Activated B cell treated with CpG ODN at 0.5 μM for 24 hours (primary cell): ENCODE measurements at regions of chr5 and their contacts with region 1.

Region 1: GRCh38 chr5:181260387-181261319 is at the start of gene TRIM52:
- DNase-seq: peak; percentile 86
- ATAC-seq: peak; percentile 80
- H3K4me3 Mint-ChIP-seq: peak within 1 kb of the TSS; percentile 98
- H3K27ac Mint-ChIP-seq: peak within 1 kb of the TSS; percentile 96
- H3K4me1 Mint-ChIP-seq: peaks cover 49% of the 10 kb centered on the region
- H3K27me3 Mint-ChIP-seq: no peaks in the 10 kb centered on the region
- CTCF ChIP-seq: no peak
- total RNA-seq, gene TRIM52: 30.9 and 36.9 TPM in 2 replicates

Region 2: DNA sequence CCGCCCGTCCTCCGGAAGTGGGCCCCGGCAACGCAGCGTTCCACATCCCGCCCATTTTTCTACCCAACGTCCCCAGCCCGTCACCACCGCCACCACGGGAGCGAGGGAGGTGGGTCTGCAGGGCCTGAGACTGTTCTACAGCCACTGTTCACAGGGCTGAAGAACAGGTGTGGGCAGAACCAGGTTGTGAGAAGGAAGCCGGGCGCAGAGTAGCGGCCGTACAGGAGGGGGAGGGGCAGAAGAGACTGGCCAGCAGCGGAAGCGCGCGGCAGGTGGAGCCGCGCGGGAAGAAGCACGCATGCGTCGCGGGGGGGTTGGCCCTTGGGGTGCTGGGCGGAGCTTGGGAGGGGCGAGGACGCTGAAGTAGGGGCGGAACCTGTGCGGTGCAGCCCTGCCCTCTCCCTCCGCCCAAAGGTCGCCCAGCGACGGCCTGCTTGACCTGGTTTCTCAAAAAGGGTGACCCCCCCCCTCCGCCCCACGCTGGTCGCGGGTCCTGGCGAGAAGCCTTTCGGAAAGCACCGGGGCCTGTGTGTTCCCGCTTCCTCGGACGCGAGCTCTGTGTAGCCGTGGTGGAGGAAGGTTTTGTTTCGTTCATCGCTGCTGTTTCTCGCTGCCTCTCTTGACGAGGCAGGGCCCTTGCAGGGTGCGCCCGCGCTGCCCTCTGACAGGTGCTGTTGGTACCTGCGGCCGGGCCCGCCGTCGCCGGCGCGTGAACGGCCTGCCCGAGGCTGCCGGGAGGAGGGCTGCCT is 450.3 kb before region 1 on chr5:
- CTCF ChIA-PET with region 1: no interaction called
- POLR2A ChIA-PET with region 1: interaction called, 8 read pairs
- intact Hi-C with region 1: loop called (anchors 1 kb)
- DNase-seq: peak; percentile 98
- ATAC-seq: peak; percentile 84
- H3K4me3 Mint-ChIP-seq: peak overlapping the region; percentile 98
- H3K27ac Mint-ChIP-seq: peak overlapping the region; percentile 100
- H3K4me1 Mint-ChIP-seq: peaks cover 76% of the 10 kb centered on the region
- H3K27me3 Mint-ChIP-seq: no peaks in the 10 kb centered on the region
- CTCF ChIP-seq: no peak

Region 3: DNA sequence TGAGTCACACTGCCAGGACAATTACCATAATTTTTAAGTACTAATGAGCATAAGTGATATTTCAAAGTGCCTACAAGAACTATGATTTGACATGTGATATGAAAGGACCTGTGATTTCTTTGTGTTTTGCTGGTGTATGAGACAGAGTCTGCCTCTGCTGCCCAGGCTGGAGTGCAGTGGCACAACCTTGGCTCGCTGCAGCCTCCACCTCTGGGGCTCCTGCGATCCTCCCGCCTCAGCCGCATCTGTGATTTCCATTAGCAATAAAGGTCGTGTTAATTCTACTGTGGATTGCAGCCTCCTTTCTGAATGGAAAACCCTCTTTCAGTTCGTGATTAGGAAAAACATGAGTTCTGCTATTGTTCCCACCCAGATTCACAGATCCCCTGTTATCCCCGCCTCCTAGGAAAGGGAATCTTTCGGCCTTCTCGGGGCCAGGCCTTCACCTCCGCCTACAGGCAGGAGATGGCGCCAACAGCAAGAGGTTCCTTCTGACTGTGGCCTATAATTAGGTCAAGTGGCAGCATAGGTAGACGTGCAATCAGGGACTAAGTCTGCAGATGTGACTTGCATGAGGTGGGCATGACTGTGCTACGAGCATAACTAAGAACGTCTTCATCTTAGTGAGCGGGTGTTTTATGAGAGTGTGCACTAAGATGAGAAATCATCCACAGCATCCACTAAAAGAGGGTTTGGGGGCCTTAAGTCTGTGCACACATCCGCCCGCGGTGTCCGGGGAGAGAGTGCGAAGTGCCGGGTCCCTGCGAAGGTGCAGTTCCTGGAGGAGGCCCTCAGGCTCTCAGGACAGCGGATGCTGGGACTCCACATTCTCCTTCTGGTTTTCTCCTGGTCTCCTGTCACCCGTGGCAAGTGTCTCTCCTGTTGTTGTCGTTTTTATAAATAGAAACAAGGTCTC is 78.7 kb before region 1 on chr5:
- CTCF ChIA-PET with region 1: interaction called, 3 read pairs
- POLR2A ChIA-PET with region 1: interaction called, 63 read pairs
- intact Hi-C with region 1: loop called (anchors 1 kb)
- DNase-seq: no peak
- ATAC-seq: peak; percentile 70
- H3K4me3 Mint-ChIP-seq: no peak overlapping the region
- H3K27ac Mint-ChIP-seq: no peak overlapping the region
- H3K4me1 Mint-ChIP-seq: peaks cover 31% of the 10 kb centered on the region
- H3K27me3 Mint-ChIP-seq: no peaks in the 10 kb centered on the region
- CTCF ChIP-seq: peak; percentile 41

Region 4: DNA sequence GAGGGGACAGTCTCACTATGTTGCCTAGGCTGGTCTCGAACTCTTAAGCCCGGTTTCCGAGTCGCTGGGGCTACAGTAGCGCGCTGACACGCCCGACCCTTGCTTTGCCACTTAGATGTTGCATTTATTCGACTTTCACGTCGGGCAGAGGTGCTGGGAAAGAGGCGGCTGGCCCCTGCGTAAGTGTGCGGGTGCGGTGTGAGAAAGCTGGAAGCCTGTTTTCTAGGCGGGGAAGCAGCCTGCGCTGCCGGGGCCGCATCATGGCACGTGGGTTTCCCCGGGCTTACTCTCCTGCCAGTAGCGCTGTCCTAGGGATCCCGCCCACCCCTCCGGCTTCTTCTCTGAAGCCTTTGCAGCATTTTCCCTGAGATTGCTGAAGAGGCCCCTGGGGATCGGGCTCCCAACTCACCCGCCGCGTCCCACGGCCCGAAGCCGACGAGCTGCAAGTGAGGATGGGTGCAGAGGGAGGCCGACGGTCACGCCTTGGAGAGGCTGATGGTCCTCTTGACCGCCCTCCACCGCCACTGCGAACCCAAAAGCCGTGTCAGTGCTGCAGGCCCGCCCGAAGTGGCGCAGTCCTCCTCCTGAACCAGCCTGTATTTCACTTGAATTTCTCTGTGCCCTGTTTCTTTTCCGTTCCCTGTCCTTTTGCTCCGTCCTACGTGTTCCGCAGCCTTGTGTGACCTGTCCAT is 43.4 kb before region 1 on chr5:
- CTCF ChIA-PET with region 1: no interaction called
- POLR2A ChIA-PET with region 1: interaction called, 127 read pairs
- intact Hi-C with region 1: loop called (anchors 1 kb)
- DNase-seq: peak; percentile 61
- ATAC-seq: peak; percentile 23
- H3K4me3 Mint-ChIP-seq: peak overlapping the region; percentile 93
- H3K27ac Mint-ChIP-seq: peak overlapping the region; percentile 96
- H3K4me1 Mint-ChIP-seq: peaks cover 40% of the 10 kb centered on the region
- H3K27me3 Mint-ChIP-seq: peaks cover 7% of the 10 kb centered on the region
- CTCF ChIP-seq: no peak

Region 5: GRCh38 chr5:181243512-181244343 is 16.9 kb before region 1 on chr5 and contains the start of gene RACK1:
- CTCF ChIA-PET with region 1: interaction called, 5 read pairs
- POLR2A ChIA-PET with region 1: interaction called, 144 read pairs
- intact Hi-C with region 1: loop called (anchors 1 kb)
- DNase-seq: peak; percentile 79
- ATAC-seq: peak; percentile 79
- H3K4me3 Mint-ChIP-seq: peak within 1 kb of the TSS; percentile 96
- H3K27ac Mint-ChIP-seq: peak within 1 kb of the TSS; percentile 98
- H3K4me1 Mint-ChIP-seq: peaks cover 73% of the 10 kb centered on the region
- H3K27me3 Mint-ChIP-seq: no peaks in the 10 kb centered on the region
- CTCF ChIP-seq: no peak
- total RNA-seq, gene RACK1: 2,528 and 2,812 TPM in 2 replicates

Region 6: DNA sequence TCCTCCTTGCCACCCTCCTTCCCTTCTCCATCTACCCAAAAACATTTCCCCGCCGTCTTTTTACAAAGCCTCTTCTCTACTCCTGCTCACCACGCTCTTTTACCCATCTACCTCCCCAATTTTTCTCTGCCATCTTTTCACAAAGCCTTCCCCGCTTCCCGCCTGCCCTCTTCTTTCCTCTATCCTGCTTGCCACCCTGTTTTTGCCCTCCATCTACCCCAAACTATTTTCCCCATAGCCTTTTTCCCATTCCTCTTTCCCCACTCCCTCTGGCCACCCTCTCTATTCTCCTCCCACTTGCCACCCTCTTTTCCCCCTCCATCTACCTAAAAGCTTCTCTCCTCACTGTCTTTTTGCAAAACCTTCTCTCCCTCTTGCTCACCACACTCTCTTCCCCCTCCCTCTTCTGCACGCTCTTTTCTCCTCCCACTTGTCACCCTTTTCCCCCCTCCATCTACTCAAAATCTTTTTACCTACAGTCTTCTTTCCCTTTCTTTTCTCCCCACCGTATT is 19.7 kb after region 1 on chr5:
- CTCF ChIA-PET with region 1: no interaction called
- POLR2A ChIA-PET with region 1: no interaction called
- intact Hi-C with region 1: no loop called
- DNase-seq: no peak
- ATAC-seq: no peak
- H3K4me3 Mint-ChIP-seq: no peak overlapping the region
- H3K27ac Mint-ChIP-seq: no peak overlapping the region
- H3K4me1 Mint-ChIP-seq: no peaks in the 10 kb centered on the region
- H3K27me3 Mint-ChIP-seq: no peaks in the 10 kb centered on the region
- CTCF ChIP-seq: no peak